PC-3 (cell line): ENCODE measurements at regions of chr11 and their contacts with region 1.

Region 1: DNA sequence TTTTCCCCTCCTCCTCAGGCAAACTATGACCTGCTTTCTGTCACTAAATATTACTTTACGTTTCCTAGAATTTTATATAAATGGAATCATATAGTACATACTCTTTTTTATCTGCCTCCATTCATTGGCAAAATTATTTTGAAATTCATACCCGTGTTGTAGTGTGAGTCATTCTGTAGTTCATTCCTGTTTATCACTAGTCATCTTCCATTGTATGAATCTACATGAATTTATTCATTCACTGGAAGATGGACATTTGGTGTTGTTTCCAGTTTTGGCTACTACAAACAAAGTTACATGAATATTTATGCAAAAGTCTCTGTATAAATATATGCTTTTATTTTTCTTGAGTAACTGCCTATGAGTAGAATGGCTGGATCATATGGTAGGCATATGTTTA is 60.7 kb upstream of the OPCML start:
- DNase-seq: no peak
- ATAC-seq: no peak
- H3K4me3 ChIP-seq: no peak overlapping the region
- H3K27ac ChIP-seq: no peak overlapping the region
- H3K4me1 ChIP-seq: no peaks in the 10 kb centered on the region
- H3K27me3 ChIP-seq: no peaks in the 10 kb centered on the region
- CTCF ChIP-seq: no peak

Region 2: DNA sequence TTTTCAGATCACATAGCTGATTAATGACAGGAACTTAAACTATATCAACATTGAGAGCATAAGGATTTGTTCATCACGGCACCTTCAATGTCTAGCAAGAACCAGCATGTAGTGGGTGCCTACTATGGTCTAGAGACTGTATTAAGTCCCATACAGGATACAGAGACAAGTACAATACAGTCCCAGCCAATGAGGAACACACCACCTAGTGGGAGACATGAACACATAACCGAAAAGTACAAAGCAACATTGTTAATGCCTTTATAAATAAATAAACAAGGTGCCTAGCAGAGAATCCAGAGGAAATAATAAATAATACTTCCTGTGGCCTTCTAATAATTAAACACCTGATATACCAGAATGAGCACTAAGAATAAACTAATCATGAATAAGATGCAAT is 26.9 kb after region 1 on chr11:
- CTCF ChIA-PET with region 1: no interaction called
- POLR2A ChIA-PET with region 1: no interaction called
- intact Hi-C with region 1: loop called (anchors 2 kb)
- DNase-seq: no peak
- ATAC-seq: no peak
- H3K4me3 ChIP-seq: no peak overlapping the region
- H3K27ac ChIP-seq: no peak overlapping the region
- H3K4me1 ChIP-seq: no peaks in the 10 kb centered on the region
- H3K27me3 ChIP-seq: no peaks in the 10 kb centered on the region
- CTCF ChIP-seq: no peak